Heart right ventricle (tissue), 16 donors: ENCODE measurements at regions of chr1 and their contacts with region 1.

Region 1: DNA sequence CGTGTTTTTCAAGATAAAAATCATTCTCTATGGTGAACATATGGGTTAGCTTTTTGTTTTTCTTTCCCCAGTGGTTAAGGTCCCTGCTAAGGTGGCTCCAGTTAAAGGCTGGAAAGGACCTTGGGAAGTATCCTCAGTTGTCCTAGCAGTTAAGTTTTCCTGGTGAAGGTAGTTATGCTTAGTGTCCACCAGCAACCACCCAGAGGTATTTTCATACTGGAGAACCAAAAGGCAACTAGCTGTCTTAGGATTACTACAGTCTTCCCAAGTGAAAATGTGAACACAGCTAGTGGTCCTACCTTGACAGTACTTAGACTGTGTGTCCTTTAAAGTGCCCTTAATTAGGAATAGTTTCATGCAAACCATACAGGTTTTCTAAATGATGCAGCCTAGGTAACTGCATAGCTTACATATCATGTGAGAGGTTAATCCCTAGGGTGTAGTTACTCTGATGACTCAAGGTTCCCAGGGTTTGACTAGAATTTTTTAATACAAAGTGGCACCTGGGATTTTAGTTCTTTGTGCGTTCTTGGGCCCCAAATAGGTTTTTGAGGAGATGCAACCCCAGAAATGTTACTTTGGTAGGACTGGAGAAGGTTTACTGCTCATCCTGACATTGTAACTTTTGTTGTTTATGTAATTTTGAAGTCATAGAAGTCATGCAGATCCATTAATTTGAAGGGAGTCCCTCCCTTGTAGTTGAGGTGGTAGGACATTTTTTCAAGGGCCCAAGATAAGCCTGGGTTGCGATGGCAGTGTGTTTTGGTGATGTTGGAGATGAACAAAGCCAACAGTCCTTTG is 36.5 kb downstream of the YY1AP1 start:
- DNase-seq: no peak
- ATAC-seq: no peak
- H3K4me3 ChIP-seq: no peak overlapping the region
- H3K27ac ChIP-seq: no peak overlapping the region
- H3K4me1 ChIP-seq: peaks cover 0 to 23% (median 4%) of the 10 kb centered on the region in 9 donors
- H3K27me3 ChIP-seq: no peaks in the 10 kb centered on the region
- CTCF ChIP-seq: no peak

Region 2: DNA sequence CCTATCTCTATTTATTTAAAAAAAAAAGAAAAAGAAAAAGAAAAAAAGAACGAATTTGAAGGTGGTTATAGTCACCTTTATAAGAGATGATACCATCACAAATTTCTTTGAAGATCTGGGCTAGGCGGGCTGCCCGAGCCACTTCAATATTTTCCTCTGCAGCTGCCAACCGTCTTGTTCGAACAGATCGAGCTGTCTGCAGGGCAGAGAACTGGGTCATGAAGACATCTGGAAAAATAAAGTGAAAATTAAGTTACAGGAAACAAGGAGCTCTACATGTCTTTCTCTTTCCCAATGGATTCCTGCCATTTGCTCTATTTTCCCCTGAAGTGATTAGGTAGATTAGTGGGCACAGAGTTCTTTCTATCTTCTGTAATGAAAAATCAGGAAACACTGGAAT is 299.4 kb before region 1 on chr1:
- intact Hi-C with region 1: loop called in 1 of 10 experiments (anchors 10 kb)
- DNase-seq: no peak
- ATAC-seq: no peak
- H3K4me3 ChIP-seq: no peak overlapping the region
- H3K27ac ChIP-seq: no peak overlapping the region
- H3K4me1 ChIP-seq: no peaks in the 10 kb centered on the region
- H3K27me3 ChIP-seq: no peaks in the 10 kb centered on the region
- CTCF ChIP-seq: no peak

Region 3: GRCh38 chr1:155562581-155563376 is 89.3 kb before region 1 on chr1 and contains the start of gene ASH1L:
- intact Hi-C with region 1: no loop called
- DNase-seq: peak; percentile 94 to 97
- ATAC-seq: peak; percentile 94 to 97 (median 96)
- H3K4me3 ChIP-seq: peak within 1 kb of the TSS; percentile 91 to 98 (median 96)
- H3K27ac ChIP-seq: peak within 1 kb of the TSS; percentile 92 to 100 (median 98)
- H3K4me1 ChIP-seq: peaks cover 8 to 47% (median 39%) of the 10 kb centered on the region in 9 donors
- H3K27me3 ChIP-seq: no peaks in the 10 kb centered on the region
- CTCF ChIP-seq: no peak
- total RNA-seq, gene ASH1L: 42.0 to 56.8 (median 48.2) TPM

Region 4: DNA sequence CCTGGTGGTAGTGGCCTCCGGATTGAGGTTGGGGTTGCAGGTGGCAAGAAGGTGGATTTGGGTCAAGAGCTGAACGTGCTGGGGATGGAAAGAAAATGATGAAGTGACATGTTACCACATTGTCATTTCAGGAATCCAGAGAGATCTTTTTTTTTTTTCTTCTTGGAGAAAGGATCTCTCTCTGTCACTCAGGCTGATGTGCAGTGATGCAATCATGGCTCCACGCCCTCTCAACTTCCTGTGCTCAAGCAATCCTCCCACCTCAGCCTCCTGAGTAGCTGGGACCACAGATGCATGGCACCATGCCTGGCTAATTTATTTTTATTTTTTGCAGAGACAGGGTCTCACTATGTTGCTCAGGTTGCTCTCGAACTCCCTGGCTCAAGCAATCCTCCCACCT is 124.3 kb after region 1 on chr1:
- intact Hi-C with region 1: no loop called
- DNase-seq: peak in 1 of 2 donors; percentile 11
- ATAC-seq: peak in 2 of 8 donors; percentile 40 to 49
- H3K4me3 ChIP-seq: no peak overlapping the region
- H3K27ac ChIP-seq: no peak overlapping the region
- H3K4me1 ChIP-seq: no peaks in the 10 kb centered on the region
- H3K27me3 ChIP-seq: no peaks in the 10 kb centered on the region
- CTCF ChIP-seq: no peak